ENCODE measurements at regions of chr5 and their contacts with region 1.

Region 1: GRCh38 chr5:140145818-140146522 is 20.2 kb downstream of the IGIP start:
- DNase-seq: peak; percentile 74
- H3K4me3 Mint-ChIP-seq: peak overlapping the region; percentile 24
- H3K27ac Mint-ChIP-seq: no peak overlapping the region
- H3K4me1 Mint-ChIP-seq: peaks cover 26% of the 10 kb centered on the region
- H3K27me3 Mint-ChIP-seq: peaks cover 10% of the 10 kb centered on the region

Region 2: DNA sequence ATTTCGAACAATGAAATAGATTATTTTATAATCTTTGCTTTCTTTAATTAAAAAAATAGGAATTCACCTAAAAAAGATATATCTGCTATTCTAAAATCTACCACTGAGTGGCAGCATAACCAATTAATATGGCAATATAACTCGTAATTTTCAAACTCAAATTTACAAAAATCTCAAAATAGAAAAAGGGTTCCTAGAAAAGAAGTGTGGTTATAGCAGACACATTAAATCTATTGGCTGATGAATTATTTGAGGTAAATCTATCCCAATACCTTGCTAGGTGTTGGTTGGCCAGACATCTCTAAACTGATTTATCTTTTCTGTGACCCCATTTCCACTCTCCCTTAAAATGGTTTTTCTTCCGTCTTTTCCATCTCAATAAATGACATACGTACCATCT is 72.7 kb before region 1 on chr5:
- CTCF ChIA-PET with region 1: interaction called, 126 read pairs
- POLR2A ChIA-PET with region 1: no interaction called
- intact Hi-C with region 1: loop called (anchors 1 kb)
- DNase-seq: no peak
- H3K4me3 Mint-ChIP-seq: no peak overlapping the region
- H3K27ac Mint-ChIP-seq: no peak overlapping the region
- H3K4me1 Mint-ChIP-seq: no peaks in the 10 kb centered on the region
- H3K27me3 Mint-ChIP-seq: peaks cover 16% of the 10 kb centered on the region

Region 3: DNA sequence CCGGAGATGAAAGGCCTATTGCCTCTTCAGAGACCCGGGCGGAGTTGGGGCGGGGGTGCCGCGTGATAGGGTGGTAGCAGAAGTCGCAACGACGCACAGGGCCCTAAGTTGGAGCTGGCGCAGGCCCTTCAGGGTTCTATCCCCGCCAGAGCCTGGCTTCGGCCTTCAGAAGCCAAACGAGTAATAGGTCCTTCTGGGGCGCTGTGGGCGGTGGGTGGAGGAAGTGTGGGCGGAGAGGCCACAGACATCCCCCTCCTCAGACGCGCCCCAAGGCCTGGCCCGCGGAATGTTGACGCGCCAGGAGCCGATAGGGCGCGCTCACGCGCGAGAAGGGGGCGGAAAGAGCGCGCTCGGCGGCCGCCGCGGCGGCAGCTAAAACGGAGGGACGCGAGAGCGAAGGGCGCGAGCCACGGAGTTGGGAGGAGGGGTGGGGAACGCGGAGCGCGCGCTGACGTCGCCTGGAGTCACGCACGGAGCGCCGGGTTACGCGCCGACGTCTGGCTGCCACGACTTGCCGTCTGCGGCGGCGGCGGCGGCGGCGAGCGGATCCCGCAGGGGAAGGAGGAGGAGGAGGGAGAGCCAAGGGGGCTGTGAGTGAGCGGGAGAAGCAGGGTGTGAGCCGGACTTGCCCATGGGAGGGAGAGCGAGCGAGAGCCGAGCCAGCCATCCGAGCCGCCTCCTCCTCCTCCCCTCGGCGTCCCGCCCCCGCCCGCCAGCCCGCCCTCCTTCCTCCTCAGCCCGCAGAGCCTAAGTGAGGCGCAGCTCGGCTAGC is 38.5 kb before region 1 on chr5:
- CTCF ChIA-PET with region 1: interaction called, 112 read pairs
- POLR2A ChIA-PET with region 1: interaction called, 4 read pairs
- intact Hi-C with region 1: loop called (anchors 1 kb)
- DNase-seq: peak; percentile 95
- H3K4me3 Mint-ChIP-seq: peak overlapping the region; percentile 98
- H3K27ac Mint-ChIP-seq: peak overlapping the region; percentile 94
- H3K4me1 Mint-ChIP-seq: peaks cover 43% of the 10 kb centered on the region
- H3K27me3 Mint-ChIP-seq: no peaks in the 10 kb centered on the region

Region 4: GRCh38 chr5:140126315-140127012 is 19.5 kb before region 1 on chr5:
- CTCF ChIA-PET with region 1: interaction called, 66 read pairs
- POLR2A ChIA-PET with region 1: interaction called, 3 read pairs
- intact Hi-C with region 1: no loop called
- DNase-seq: no peak
- H3K4me3 Mint-ChIP-seq: no peak overlapping the region
- H3K27ac Mint-ChIP-seq: no peak overlapping the region
- H3K4me1 Mint-ChIP-seq: peaks cover 37% of the 10 kb centered on the region
- H3K27me3 Mint-ChIP-seq: no peaks in the 10 kb centered on the region

Region 5: GRCh38 chr5:140157032-140157803 is 11.2 kb after region 1 on chr5:
- CTCF ChIA-PET with region 1: interaction called, 74 read pairs
- POLR2A ChIA-PET with region 1: no interaction called
- intact Hi-C with region 1: loop called (anchors 1 kb)
- DNase-seq: peak; percentile 92
- H3K4me3 Mint-ChIP-seq: peak overlapping the region; percentile 2
- H3K27ac Mint-ChIP-seq: no peak overlapping the region
- H3K4me1 Mint-ChIP-seq: peaks cover 10% of the 10 kb centered on the region
- H3K27me3 Mint-ChIP-seq: no peaks in the 10 kb centered on the region